Dendritic cell treated with granulocyte-macrophage colony-stimulating factor and Interleukin-4, amounts not matched to agents 40 ng/mL and 50 ng/mL, for 4 days (primary cell): ENCODE measurements at regions of chr5 and their contacts with region 1.

Region 1: DNA sequence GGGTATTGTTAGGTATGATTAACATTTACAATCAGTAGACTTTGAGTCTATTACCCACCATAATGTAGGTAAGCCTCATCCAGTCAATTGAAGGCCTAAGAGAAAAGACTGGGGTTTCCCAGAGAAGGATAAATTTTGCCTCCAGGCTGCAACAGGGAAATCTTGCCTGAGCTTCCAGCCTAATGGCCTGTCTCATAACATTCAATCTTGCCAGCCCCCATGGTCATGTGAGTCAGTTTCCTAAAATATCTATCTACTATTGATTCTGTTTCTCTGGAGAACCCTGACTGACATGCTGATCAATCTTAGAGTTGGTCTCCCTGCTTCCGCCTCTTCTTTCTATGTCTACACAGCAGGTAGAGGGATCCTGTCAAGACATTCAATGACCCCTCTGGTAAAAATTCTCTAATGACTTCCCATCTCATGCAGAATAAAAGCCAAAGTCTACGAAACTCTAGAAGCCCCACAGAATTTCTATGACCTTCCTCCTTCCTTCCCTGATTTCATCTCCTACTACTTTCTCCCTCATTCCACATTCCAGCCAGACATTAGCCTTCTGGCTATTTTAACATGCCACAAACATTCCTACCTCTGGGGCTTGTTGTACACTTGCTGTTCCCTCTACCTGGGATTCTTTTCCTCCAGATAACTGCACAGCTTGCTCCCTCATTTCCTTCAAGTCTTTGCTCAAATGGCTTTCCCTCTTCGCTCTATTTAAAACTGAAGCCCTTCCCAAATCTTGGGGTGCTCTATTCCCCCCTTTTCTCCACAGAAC is 60.3 kb downstream of the FBXW11 start:
- H3K4me3 Mint-ChIP-seq: no peak overlapping the region
- H3K27ac Mint-ChIP-seq: no peak overlapping the region
- H3K4me1 Mint-ChIP-seq: peaks cover 16% of the 10 kb centered on the region
- H3K27me3 Mint-ChIP-seq: no peaks in the 10 kb centered on the region

Region 2: DNA sequence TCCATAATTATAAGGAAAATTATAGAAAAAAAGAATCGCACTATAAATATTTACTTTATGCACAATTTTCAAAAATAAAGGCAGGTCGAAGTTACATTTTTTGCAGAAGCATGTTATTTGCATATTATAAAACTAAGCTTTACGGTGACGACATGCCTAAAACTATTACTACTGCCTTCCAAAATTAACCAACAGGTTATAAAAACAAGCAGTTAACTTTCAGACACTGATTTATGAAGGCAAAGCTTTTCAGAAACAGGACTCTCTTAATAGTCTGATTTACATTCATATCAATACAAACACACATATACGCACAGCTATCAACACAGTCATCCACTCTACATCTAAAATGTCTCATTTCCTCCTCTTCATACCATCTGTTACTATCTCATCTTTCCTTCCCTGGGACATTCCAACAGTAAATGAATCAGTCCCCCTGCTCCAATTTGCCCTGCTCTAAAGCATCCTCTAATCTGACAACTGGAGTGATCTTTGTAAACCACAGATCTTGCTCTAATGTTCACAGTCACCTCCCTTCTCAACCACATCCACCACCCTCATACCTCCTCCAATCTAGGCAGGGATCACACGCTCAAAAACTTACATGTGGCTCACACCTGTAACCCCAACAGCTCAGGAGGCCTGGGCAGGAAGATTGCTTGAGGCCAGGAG is 38.7 kb after region 1 on chr5:
- intact Hi-C with region 1: loop called (anchors 5 kb)
- H3K4me3 Mint-ChIP-seq: no peak overlapping the region
- H3K27ac Mint-ChIP-seq: no peak overlapping the region
- H3K4me1 Mint-ChIP-seq: peaks cover 32% of the 10 kb centered on the region
- H3K27me3 Mint-ChIP-seq: no peaks in the 10 kb centered on the region